ENCODE measurements at regions of chr4 and their contacts with region 1.

Region 1: GRCh38 chr4:5812506-5813229 is 80.2 kb downstream of the CRMP1 start:
- DNase-seq: peak in 4 of 14 experiments; percentile 13 to 56 (median 48)
- ATAC-seq: no peak
- H3K4me3 ChIP-seq: no peak overlapping the region
- H3K4me3 Mint-ChIP-seq: no peak overlapping the region
- H3K27ac ChIP-seq: no peak overlapping the region
- H3K27ac Mint-ChIP-seq: no peak overlapping the region
- H3K4me1 ChIP-seq: no peaks in the 10 kb centered on the region
- H3K4me1 Mint-ChIP-seq: no peaks in the 10 kb centered on the region
- H3K27me3 ChIP-seq: no peaks in the 10 kb centered on the region
- H3K27me3 Mint-ChIP-seq: peaks cover 9% of the 10 kb centered on the region
- CTCF ChIP-seq: peak; percentile 29

Region 2: GRCh38 chr4:4995103-4995907 is 817.4 kb before region 1 on chr4:
- CTCF ChIA-PET with region 1: no interaction called
- POLR2A ChIA-PET with region 1: no interaction called
- intact Hi-C with region 1: loop called in 1 of 2 experiments (anchors 10 kb)
- DNase-seq: peak in 10 of 14 experiments; percentile 5 to 55 (median 15)
- ATAC-seq: no peak
- H3K4me3 ChIP-seq: no peak overlapping the region
- H3K4me3 Mint-ChIP-seq: no peak overlapping the region
- H3K27ac ChIP-seq: no peak overlapping the region
- H3K27ac Mint-ChIP-seq: no peak overlapping the region
- H3K4me1 ChIP-seq: no peaks in the 10 kb centered on the region
- H3K4me1 Mint-ChIP-seq: no peaks in the 10 kb centered on the region
- H3K27me3 ChIP-seq: peaks cover 3 to 7% of the 10 kb centered on the region in 2 experiments
- H3K27me3 Mint-ChIP-seq: peaks cover 20% of the 10 kb centered on the region
- CTCF ChIP-seq: peak; percentile 69

Measured in CD4-positive, alpha-beta T cell (primary cell).